ENCODE measurements at regions of chr20 and their contacts with region 1.

Region 1: DNA sequence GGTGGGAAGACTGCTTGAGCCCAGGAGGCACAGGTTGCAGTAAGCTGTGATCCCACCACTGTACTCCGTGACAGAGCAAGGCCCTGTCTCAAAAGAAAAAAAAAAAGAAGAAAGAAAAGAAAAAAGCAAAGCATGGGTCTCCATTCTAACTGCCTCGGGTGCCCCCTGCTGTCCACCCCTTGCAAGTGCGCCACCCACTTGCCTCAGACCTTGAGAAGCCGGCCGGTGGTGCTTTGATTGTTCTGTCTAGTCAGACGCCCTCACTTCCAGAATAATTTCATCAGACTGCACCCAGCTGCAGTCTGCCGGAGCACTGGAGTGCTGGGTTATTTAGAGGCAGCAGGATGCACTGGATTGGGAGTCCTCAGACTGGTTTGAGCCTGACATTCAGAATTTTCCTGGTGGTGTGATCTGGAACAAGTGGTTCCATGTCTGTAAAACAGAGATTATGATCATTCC is 17.6 kb upstream of the TM9SF4 start:
- DNase-seq: peak; percentile 79
- CTCF ChIP-seq: peak; percentile 89

Region 2: DNA sequence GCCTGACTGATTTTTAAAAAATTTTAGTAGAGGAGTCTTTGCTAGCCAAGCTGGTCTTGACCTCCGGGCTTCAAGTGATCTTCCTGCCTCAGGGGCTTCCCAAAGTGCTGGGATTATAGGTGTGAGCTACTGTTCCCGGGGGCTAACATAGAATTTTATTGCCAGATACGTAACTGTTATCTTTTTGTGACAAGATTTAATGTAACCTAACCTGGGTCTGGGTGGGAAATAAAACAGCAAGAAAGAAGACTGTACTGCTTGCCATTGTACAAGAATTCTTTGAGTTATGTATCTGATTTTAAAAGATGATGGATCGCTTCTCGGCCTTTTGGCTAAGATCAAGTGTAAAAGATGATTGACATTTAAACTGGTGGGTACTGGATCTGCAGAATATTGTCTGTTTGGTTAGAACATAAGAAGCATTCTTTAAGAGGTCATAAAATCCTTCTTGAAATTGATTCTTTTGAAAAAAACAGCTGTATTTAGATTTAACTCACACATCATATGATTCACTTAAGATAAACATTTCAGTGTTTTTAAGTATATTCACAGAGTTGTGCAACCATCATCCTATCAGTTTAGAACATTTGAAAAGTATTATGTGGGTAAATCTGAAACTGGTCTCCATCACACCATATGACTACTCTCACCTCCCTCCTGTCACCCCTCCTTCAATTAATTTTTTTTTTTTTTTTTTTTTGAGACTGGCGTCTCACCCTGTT is 331.2 kb before region 1 on chr20:
- CTCF ChIA-PET with region 1: no interaction called
- POLR2A ChIA-PET with region 1: no interaction called
- DNase-seq: no peak
- CTCF ChIP-seq: no peak

Region 3: GRCh38 chr20:31822421-31823330 is 269.2 kb before region 1 on chr20:
- CTCF ChIA-PET with region 1: interaction called, 20 read pairs
- POLR2A ChIA-PET with region 1: no interaction called
- DNase-seq: peak; percentile 92
- CTCF ChIP-seq: peak; percentile 96

Region 4: DNA sequence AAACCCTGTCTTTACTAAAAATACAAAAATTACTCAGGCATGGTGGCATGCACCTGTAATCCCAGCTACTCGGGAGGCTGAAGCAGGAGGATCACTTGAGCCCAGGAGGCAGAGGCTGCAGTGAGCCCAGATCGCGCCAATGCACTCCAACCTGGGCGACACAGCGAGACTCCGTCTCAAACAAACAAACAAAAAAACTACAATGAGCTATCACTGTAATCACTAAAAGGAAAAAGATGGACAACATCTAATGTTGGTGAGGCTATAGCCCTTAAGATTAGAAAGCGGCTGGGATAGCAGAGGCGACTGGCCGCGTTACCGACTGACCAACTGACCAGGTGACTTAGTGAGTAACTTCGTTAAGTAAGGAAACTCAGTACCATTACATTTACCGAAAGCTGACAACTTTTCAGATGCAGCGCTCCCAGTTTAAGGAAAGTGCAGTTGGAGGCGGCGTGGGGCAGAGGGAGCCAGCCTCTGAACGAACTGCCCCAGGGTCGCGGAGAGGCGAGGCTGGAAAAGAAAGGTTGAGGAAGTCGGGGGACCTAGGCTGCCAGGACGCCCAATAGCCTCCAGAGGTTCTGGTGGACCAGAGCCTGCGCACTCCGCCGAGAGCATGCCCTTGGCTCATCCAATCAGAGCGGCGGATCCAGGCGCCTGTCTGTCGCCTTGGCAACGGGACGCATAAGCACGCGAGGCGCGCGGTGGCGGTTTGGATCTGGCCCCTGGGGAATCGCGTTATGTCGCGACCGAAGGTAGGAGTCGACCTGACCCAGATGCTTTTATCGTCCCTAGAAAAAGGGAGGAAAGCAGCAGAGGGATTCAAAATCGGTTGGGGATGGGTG is 212.6 kb before region 1 on chr20:
- CTCF ChIA-PET with region 1: no interaction called
- POLR2A ChIA-PET with region 1: no interaction called
- DNase-seq: peak; percentile 90
- CTCF ChIP-seq: no peak

Region 5: GRCh38 chr20:32040142-32041022 is 51.5 kb before region 1 on chr20:
- CTCF ChIA-PET with region 1: interaction called, 46 read pairs
- POLR2A ChIA-PET with region 1: no interaction called
- DNase-seq: peak; percentile 61
- CTCF ChIP-seq: no peak

Region 6: DNA sequence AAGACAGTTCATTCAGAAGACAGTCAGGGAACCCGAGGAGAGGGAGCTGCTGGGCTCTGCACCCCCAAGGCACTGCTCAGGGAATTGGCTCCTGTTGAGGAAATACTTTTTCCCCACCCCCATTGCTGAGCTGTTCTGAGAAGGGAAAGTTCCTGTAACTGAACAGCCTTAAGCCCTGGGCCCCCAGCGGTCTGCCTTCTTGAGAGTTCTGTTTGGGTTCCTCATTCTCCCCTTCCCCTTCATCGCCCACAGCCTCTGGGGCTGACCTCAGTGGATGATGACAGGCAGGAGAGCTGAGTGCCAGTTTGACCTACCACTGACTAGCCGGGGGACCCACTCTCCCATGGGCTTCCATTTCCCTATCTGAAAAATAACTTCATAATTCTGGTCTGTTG is 29.1 kb before region 1 on chr20:
- CTCF ChIA-PET with region 1: interaction called, 12 read pairs
- POLR2A ChIA-PET with region 1: interaction called, 12 read pairs
- DNase-seq: peak; percentile 54
- CTCF ChIP-seq: no peak

Region 7: DNA sequence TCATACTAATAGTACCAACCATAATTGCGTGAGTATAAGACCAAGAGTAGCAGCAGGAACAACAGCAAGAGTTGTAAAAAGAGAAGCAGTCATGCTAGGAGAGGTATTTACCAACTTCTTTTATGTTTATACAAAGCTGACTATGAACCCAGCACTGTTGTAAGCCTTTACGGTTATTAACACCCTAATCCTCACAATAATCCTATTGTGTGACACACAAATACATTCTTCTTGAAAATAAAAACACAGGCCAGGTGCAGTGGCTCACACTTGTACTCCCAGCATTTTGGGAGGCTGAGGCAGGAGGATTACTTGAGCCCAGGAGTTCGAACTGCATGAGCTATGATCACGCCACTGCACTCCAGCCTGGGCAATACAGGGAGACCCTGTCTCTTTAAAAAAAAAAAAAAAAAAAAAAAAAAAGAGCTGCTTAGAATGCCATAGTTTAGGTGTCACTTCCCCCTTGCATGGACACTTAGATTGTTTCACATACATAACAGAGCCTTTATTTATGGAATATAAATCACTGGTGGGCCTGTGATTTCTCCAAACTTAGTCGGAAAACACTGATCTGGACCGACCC is 19.7 kb before region 1 on chr20:
- CTCF ChIA-PET with region 1: interaction called, 10 read pairs
- POLR2A ChIA-PET with region 1: no interaction called
- DNase-seq: no peak
- CTCF ChIP-seq: no peak

Region 8: GRCh38 chr20:32079655-32080109 is 12.2 kb before region 1 on chr20:
- CTCF ChIA-PET with region 1: interaction called, 47 read pairs
- POLR2A ChIA-PET with region 1: interaction called, 3 read pairs
- DNase-seq: no peak
- CTCF ChIP-seq: no peak

Region 9: DNA sequence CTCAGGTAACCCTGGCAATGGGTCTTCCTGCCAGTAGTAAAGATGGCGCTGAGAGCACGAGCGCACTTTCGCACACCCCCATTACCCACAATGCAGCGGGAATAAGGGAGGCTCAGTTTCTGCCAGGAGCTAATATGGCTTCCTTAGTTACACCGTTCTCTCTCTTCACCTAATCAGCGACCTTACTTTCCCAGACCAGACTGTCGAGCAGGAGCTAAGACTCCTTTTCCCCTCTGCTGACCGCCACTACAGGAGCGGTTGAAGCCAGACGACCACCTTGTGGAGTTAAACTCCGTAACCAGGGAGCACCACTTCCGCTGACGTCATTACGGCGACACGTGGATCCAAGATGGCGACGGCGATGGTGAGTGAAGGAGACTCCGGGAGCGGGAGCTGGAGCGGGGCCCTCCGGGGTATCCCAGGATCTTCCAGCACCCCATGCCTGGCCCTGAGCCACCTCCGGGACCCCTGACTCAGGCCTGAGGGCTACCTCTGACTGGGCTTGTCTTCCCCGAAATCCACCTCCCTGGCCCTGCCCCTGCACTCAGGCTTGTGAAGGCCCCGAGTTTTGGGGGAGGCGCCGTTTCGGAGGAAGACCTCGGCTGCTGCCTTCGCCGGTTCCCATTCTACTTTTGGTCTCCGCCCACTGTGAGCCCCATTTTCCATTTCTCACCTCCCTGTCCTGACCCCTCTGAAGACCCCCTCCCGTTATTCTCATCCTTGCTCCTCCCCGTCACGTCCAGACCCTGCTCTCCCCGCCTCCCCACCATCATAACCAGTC is 17.7 kb after region 1 on chr20 and contains the start of gene TM9SF4:
- CTCF ChIA-PET with region 1: interaction called, 13 read pairs
- POLR2A ChIA-PET with region 1: interaction called, 8 read pairs
- DNase-seq: peak; percentile 89
- CTCF ChIP-seq: no peak